ENCODE measurements at regions of chr2 and their contacts with region 1.

Region 1: DNA sequence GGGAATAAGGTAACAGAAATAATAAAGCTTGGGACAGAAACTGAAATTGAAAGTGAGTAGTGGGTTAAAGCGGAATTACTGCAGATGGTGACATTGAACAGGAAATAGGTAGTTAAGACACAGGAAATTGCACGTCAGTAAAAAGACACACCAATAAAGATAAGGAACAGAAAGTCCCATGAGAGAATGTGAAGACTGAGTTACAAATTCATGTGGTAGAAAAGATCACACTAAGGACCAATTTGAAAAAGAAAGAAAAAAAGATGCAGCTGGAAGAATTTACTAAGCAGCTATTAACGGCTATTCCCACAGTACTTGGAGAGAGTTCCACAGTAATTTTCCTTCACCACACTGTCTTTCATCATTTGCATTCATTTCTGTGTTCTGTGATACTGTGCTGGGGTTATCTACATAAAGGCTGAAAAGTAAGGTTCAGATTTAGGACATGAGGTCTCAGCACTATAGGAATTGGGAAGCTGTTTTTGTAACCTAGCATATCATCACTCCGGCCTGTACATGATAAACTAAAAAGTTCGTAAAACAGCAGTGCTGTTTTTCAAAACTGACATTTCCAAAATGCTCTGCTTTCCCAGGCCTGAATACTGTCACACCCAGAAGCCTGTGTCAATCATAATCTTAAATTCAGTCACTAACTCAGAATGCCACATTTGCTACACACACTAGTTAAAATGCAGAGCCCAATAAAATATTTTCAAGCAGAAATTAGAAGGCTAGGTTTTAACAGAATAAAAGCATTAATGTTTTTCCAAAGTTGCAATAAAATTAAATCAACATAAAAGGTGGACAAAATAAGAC is 42.9 kb downstream of the SRBD1 start:
- DNase-seq: no peak
- ATAC-seq: peak; percentile 97
- H3K4me3 Mint-ChIP-seq: peak overlapping the region; percentile 60
- H3K27ac Mint-ChIP-seq: peak overlapping the region; percentile 91
- H3K4me1 Mint-ChIP-seq: peaks cover 16% of the 10 kb centered on the region
- H3K27me3 Mint-ChIP-seq: no peaks in the 10 kb centered on the region

Region 2: GRCh38 chr2:44578421-44579135 is 989.6 kb before region 1 on chr2:
- CTCF ChIA-PET with region 1: no interaction called
- POLR2A ChIA-PET with region 1: no interaction called
- intact Hi-C with region 1: loop called in 1 of 2 experiments (anchors 2 kb)
- DNase-seq: no peak
- ATAC-seq: peak; percentile 96
- H3K4me3 Mint-ChIP-seq: peak overlapping the region; percentile 34
- H3K27ac Mint-ChIP-seq: peak overlapping the region; percentile 83
- H3K4me1 Mint-ChIP-seq: peaks cover 32% of the 10 kb centered on the region
- H3K27me3 Mint-ChIP-seq: no peaks in the 10 kb centered on the region

Region 3: DNA sequence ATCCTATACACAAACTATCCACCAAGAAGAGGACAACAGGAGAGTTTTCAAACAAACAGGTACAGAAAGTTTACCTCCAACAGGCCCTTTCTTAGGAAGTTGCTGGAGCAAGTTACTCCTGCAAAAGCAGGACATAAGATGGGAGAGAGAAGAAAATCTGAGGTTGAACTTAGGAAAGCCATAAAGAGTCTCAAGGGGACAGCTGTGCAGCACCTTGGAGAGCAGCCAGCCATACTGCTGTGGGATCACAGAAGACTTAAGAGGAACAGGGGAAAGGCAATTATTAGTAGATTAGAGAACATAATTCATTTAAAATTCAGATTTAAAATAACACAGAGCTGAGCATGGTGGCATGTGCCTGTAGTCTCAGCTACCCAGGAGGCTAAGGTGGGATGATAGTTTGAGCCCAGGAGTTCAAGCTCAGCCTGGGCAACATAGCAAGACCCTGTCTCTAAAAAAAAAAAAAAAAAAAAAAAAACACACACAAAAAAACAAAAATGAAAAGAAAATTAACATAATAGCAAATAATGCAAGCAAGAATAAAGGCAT is 774.8 kb before region 1 on chr2:
- CTCF ChIA-PET with region 1: no interaction called
- POLR2A ChIA-PET with region 1: no interaction called
- intact Hi-C with region 1: no loop called
- DNase-seq: peak; percentile 26
- ATAC-seq: no peak
- H3K4me3 Mint-ChIP-seq: no peak overlapping the region
- H3K27ac Mint-ChIP-seq: no peak overlapping the region
- H3K4me1 Mint-ChIP-seq: no peaks in the 10 kb centered on the region
- H3K27me3 Mint-ChIP-seq: peaks cover 28% of the 10 kb centered on the region

Region 4: GRCh38 chr2:44833171-44834069 is 734.8 kb before region 1 on chr2:
- CTCF ChIA-PET with region 1: no interaction called
- POLR2A ChIA-PET with region 1: no interaction called
- intact Hi-C with region 1: loop called in 1 of 2 experiments (anchors 10 kb)
- DNase-seq: peak; percentile 21
- ATAC-seq: peak; percentile 24
- H3K4me3 Mint-ChIP-seq: no peak overlapping the region
- H3K27ac Mint-ChIP-seq: peak overlapping the region; percentile 78
- H3K4me1 Mint-ChIP-seq: peaks cover 31% of the 10 kb centered on the region
- H3K27me3 Mint-ChIP-seq: peaks cover 11% of the 10 kb centered on the region

Region 5: GRCh38 chr2:45554073-45554741 is 14.0 kb before region 1 on chr2:
- CTCF ChIA-PET with region 1: interaction called, 7 read pairs
- POLR2A ChIA-PET with region 1: no interaction called
- intact Hi-C with region 1: loop called in 1 of 2 experiments (anchors 1 kb)
- DNase-seq: no peak
- ATAC-seq: peak; percentile 57
- H3K4me3 Mint-ChIP-seq: no peak overlapping the region
- H3K27ac Mint-ChIP-seq: peak overlapping the region; percentile 68
- H3K4me1 Mint-ChIP-seq: peaks cover 25% of the 10 kb centered on the region
- H3K27me3 Mint-ChIP-seq: no peaks in the 10 kb centered on the region

Region 6: GRCh38 chr2:45650851-45651414 is 82.8 kb after region 1 on chr2:
- CTCF ChIA-PET with region 1: interaction called, 3 read pairs
- POLR2A ChIA-PET with region 1: no interaction called
- intact Hi-C with region 1: loop called in 1 of 2 experiments (anchors 1 kb)
- DNase-seq: peak; percentile 94
- ATAC-seq: peak; percentile 85
- H3K4me3 Mint-ChIP-seq: peak overlapping the region; percentile 87
- H3K27ac Mint-ChIP-seq: peak overlapping the region; percentile 96
- H3K4me1 Mint-ChIP-seq: peaks cover 27% of the 10 kb centered on the region
- H3K27me3 Mint-ChIP-seq: peaks cover 6% of the 10 kb centered on the region